ENCODE measurements at regions of chr5 and their contacts with region 1.

Region 1: DNA sequence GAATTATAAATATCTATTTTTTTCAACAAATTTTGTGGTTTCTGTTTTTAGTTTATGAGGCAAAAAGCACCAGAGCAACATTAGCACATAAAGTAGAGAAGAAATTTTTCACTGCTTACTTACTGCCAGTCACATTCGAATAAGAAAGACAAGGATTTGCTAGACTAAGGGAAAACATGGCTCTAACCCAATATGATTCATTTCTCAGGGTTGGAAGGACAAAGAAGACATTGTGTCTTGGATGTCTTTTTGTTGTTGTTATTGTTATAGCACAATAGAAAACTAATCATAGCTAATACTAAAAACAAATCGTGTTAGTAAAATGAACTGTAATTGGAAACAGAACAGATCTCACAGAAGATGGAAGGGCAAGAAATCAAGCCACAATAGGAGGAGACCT is 90.9 kb upstream of the SLCO6A1 start:
- DNase-seq: no peak
- ATAC-seq: no peak

Region 2: DNA sequence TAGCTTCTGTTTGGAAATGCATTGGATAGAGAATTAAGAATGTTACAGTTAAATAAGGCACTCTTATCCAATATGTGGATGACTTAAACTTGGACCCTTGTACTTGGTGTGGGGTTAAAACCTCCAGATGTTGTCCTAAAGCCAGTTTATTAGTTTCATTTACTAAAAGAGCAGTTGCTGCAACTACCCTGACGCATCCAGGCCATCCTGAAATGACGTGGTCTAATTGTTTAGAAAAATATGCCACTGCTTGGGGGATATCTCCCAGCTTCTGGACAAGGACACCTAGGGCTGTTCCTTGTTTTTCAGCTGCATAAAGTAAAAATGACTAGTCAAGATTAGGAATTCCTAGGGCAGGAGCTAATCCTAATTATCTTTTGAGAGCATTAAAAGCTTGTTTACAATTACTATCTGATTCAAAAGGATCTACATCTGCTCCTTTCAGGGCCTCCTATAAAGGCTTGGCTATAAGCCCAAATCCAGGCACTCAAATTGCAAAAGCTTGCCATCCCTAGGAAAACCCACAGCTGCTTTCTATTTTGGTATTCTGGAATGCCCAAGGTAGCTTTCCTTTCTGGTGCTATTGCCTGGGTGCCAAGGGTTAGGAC is 247.9 kb before region 1 on chr5:
- intact Hi-C with region 1: no loop called
- DNase-seq: no peak
- ATAC-seq: no peak

Region 3: GRCh38 chr5:102523541-102524175 is 66.0 kb before region 1 on chr5:
- intact Hi-C with region 1: no loop called
- DNase-seq: no peak
- ATAC-seq: no peak

Region 4: DNA sequence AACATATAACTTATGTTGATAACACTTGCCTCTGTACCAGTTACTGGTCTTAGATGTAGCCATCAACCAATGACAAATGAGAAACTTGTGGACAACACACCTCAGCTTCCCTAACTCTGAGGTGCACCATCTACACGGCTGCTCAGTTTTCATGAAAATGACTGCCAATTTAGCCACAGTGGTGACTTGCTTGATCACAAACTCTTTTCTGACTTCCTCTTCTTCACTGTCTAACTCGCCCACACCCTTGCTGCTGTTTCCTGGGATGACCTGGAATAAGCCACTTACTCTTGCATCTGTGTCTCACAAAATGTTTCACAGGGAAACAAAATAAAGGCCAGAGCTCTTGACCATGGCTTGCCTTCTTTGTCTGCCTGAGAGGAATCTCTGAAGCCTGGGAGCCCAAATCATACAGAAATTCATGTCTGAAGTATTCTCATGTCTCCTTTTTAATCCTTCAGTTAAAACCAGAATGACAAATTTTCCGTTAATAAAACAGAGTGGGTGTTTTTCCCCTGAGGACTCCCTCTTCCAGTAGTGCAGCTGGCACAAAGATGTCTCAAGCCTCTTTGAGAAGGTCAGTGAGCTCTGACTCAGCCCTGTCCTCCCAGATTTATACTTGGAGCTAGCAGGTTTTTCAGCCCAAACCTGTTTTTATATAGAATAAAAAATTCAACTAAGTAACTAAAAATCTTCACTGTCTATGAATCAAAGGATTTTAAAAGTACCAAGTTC is 38.9 kb after region 1 on chr5:
- intact Hi-C with region 1: no loop called
- DNase-seq: no peak
- ATAC-seq: peak; percentile 50

Region 5: GRCh38 chr5:102666164-102666946 is 76.7 kb after region 1 on chr5:
- intact Hi-C with region 1: loop called (anchors 5 kb)
- DNase-seq: no peak
- ATAC-seq: no peak

Region 6: GRCh38 chr5:102959055-102959454 is 369.4 kb after region 1 on chr5:
- intact Hi-C with region 1: no loop called
- DNase-seq: no peak
- ATAC-seq: peak; percentile 38

Measured in Right ventricle myocardium superior (tissue), 1 donor.